K562 (cell line): ENCODE measurements at regions of chr1 and their contacts with region 1.

Region 1: GRCh38 chr1:5915587-5916571 is 76.3 kb downstream of the NPHP4 start:
- DNase-seq: peak; percentile 53 to 66 (median 57)
- ATAC-seq: peak; percentile 57
- H3K4me3 ChIP-seq: no peak overlapping the region
- H3K27ac ChIP-seq: peak overlapping the region; percentile 84; the same call in 1 of the 3 replicates
- H3K4me1 ChIP-seq: peaks cover 17 to 29% of the 10 kb centered on the region in 2 experiments
- H3K27me3 ChIP-seq: no peaks in the 10 kb centered on the region
- CTCF ChIP-seq: peak; percentile 52 to 90 (median 84); a peak in 5 of 6 replicates
- EP300 ChIP-seq: no peak
- POLR2A ChIP-seq: no peak
- RAD21 ChIP-seq: peak; percentile 60 to 78

Region 2: GRCh38 chr1:5637171-5637570 is 278.7 kb before region 1 on chr1:
- CTCF ChIA-PET with region 1: no interaction called
- POLR2A ChIA-PET with region 1: no interaction called
- in situ Hi-C with region 1: no loop called
- intact Hi-C with region 1: loop called (anchors 10 kb)
- DNase-seq: peak in 2 of 4 experiments; percentile 28 to 31
- ATAC-seq: no peak
- H3K4me3 ChIP-seq: no peak overlapping the region
- H3K27ac ChIP-seq: no peak overlapping the region
- H3K4me1 ChIP-seq: no peaks in the 10 kb centered on the region
- H3K27me3 ChIP-seq: peaks cover 0 to 9% of the 10 kb centered on the region in 2 experiments; a peak in 1 of 5 replicates
- CTCF ChIP-seq: peak; percentile 50 to 52 (median 51); a peak in 5 of 6 replicates
- EP300 ChIP-seq: no peak
- POLR2A ChIP-seq: no peak
- RAD21 ChIP-seq: peak in 1 of 2 experiments; percentile 55; a peak in 2 of 4 replicates

Region 3: DNA sequence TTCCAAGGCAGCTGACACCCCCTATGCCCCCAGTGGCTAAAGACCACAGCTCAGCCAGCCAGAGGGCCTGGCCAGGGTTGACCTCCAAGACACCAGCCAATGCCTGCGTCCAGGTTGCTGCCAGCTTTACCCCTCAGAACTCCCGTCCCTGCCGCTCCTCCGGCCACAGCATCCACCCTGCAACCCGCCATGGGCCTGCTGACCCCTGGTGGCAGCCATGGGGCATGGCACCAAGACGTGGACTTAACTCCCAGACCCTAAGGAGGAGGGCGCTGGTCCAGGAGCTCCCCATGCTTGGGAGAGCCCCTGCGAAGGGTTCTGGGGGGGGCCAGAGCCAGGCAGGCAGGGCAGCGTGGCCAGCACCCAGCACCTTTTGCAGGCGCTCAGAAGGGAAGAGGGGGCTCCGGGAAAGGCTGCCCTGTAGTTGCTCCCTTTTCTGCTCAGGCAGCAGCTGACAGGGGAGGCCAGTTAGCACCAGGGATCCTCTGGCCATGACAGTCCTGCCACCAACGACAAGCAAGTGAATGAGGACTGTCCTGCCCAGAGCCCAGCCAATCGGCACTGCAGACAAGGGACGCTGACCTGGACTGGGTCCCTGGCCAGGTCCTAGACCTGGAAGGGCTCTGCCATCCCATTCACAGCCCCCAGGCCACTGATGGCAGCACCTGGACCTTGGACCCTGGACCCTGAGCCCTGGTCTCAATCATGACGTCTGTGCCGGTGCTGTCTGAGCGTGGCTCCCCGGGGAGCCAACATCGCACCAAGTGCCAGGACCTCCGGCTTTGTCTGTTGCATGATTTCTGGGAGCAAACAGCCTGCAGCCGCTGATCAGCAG is 169.9 kb before region 1 on chr1:
- CTCF ChIA-PET with region 1: no interaction called
- POLR2A ChIA-PET with region 1: no interaction called
- in situ Hi-C with region 1: no loop called
- intact Hi-C with region 1: loop called (anchors 5 kb)
- DNase-seq: peak; percentile 81 to 93 (median 92)
- ATAC-seq: peak; percentile 98
- H3K4me3 ChIP-seq: no peak overlapping the region
- H3K27ac ChIP-seq: no peak overlapping the region
- H3K4me1 ChIP-seq: peaks cover 0 to 17% of the 10 kb centered on the region in 2 experiments; a peak in 1 of 5 replicates
- H3K27me3 ChIP-seq: peaks cover 5 to 46% of the 10 kb centered on the region in 2 experiments; a peak in 3 of 5 replicates
- CTCF ChIP-seq: peak; percentile 97 to 98 (median 98)
- EP300 ChIP-seq: no peak
- POLR2A ChIP-seq: no peak
- RAD21 ChIP-seq: peak; percentile 74 to 94

Region 4: GRCh38 chr1:5938101-5938646 is 22.3 kb after region 1 on chr1:
- CTCF ChIA-PET with region 1: no interaction called
- POLR2A ChIA-PET with region 1: interaction called, 12 read pairs
- in situ Hi-C with region 1: no loop called
- intact Hi-C with region 1: no loop called
- DNase-seq: no peak
- ATAC-seq: no peak
- H3K4me3 ChIP-seq: no peak overlapping the region
- H3K27ac ChIP-seq: no peak overlapping the region
- H3K4me1 ChIP-seq: peaks cover 0 to 18% of the 10 kb centered on the region in 2 experiments; a peak in 2 of 5 replicates
- H3K27me3 ChIP-seq: no peaks in the 10 kb centered on the region
- CTCF ChIP-seq: no peak
- EP300 ChIP-seq: no peak
- POLR2A ChIP-seq: no peak
- RAD21 ChIP-seq: no peak

Region 5: GRCh38 chr1:5992026-5992813 is 76.3 kb after region 1 on chr1 and contains the start of gene NPHP4:
- CTCF ChIA-PET with region 1: no interaction called
- POLR2A ChIA-PET with region 1: interaction called, 4 read pairs
- in situ Hi-C with region 1: no loop called
- intact Hi-C with region 1: loop called (anchors 5 kb)
- DNase-seq: peak; percentile 99 to 100 (median 100)
- ATAC-seq: peak; percentile 95
- H3K4me3 ChIP-seq: peak within 1 kb of the TSS; percentile 83
- H3K27ac ChIP-seq: peak within 1 kb of the TSS; percentile 86
- H3K4me1 ChIP-seq: peaks cover 18 to 60% of the 10 kb centered on the region in 2 experiments; a peak in 4 of 5 replicates
- H3K27me3 ChIP-seq: no peaks in the 10 kb centered on the region
- CTCF ChIP-seq: peak in 1 of 3 experiments; percentile 24; a peak in 2 of 6 replicates
- EP300 ChIP-seq: no peak
- POLR2A ChIP-seq: peak; percentile 78
- RAD21 ChIP-seq: no peak
- polyA plus RNA-seq, gene NPHP4: 0.52 to 0.77 TPM